Heart left ventricle (tissue), 16 donors: ENCODE measurements at regions of chr5 and their contacts with region 1.

Region 1: DNA sequence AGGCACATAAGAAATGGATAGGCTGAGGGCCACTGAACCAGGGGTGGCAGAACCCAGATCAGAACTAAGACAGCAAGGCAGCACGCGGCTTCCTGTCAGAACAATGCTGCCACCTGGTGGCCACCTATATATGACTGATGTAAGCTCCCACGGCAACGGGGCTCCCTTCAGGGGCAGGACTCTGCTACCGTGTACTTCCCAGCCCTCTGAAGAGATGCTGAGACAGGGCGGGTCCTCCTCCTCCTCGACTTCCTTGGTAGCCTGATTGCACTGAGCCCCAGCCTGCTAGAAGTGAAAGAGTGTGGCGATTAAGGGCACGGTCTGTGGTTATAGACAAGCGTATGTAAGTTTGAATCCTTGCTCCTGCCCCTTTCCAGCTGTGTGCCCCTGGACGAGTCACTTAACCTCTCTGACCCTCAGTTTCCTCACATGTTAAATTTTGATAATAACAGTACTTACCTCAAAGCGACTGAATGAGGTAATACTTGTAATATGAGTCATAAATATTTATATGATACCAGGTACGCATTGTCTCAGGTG is 13.3 kb downstream of the RPS14 start:
- DNase-seq: peak; percentile 85 to 93 (median 88)
- ATAC-seq: peak; percentile 53 to 87 (median 85)
- H3K4me3 ChIP-seq: no peak overlapping the region
- H3K27ac ChIP-seq: no peak overlapping the region
- H3K4me1 ChIP-seq: peaks cover 0 to 16% (median 1%) of the 10 kb centered on the region in 12 donors
- H3K27me3 ChIP-seq: no peaks in the 10 kb centered on the region
- CTCF ChIP-seq: peak; percentile 82 to 94 (median 89)
- POLR2A ChIP-seq: no peak

Region 2: GRCh38 chr5:150022163-150022540 is 414.1 kb before region 1 on chr5:
- intact Hi-C with region 1: loop called in 1 of 10 experiments (anchors 10 kb)
- DNase-seq: peak in 1 of 5 donors; percentile 36
- ATAC-seq: peak; percentile 48 to 79 (median 76)
- H3K4me3 ChIP-seq: peak overlapping the region in 3 of 12 donors; percentile 1 to 16 (median 13)
- H3K27ac ChIP-seq: peak overlapping the region; percentile 53 to 81 (median 68)
- H3K4me1 ChIP-seq: peaks cover 5 to 54% (median 40%) of the 10 kb centered on the region in 12 donors
- H3K27me3 ChIP-seq: no peaks in the 10 kb centered on the region
- CTCF ChIP-seq: no peak
- POLR2A ChIP-seq: no peak

Region 3: DNA sequence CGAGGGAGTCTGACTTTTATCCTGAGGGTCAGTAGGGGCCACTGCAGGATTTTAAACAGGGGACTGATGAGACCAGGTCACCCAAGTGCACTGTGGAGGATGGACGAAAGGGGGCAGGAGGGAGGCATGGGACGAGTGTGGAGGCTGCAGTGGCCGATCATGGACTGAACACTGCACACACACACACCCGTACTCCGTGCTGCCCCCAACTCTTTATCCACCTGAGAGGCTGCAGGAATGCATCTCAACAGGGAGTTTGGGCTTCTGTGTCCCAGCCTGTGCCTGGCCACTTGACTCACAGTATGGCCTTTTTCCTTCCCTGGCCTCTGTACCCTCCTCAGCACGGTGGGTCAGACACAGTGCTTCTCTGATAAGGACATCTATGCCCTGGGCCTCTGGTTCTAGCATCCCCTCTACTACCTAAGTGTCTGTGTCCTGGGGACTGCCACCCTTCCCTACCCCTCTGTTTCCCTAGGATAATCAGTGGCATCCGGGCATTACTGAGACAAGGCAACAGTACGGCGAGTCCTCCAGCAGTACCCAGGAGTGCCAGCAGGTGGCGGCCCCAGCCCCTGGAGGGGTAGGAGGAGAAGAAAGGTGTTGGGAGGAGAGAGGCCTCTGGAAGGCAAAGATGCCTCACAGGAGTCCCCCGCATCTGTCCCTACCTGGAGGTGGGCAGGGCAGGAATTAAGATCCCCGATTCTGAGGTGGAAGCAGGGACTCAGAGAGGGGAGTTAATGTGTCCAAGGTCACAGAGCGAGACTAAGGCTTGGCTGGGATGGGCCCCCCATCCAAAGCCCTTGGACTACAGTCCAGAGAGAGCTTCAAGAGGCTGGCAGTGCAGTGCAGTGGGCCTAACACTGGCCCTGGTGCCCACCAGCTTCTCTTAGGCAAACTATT is 274.7 kb before region 1 on chr5:
- intact Hi-C with region 1: loop called in 2 of 10 experiments (anchors 5 to 10 kb)
- DNase-seq: peak; percentile 82 to 91 (median 83)
- ATAC-seq: peak; percentile 41 to 70 (median 56)
- H3K4me3 ChIP-seq: no peak overlapping the region
- H3K27ac ChIP-seq: peak overlapping the region in 11 of 12 donors; percentile 37 to 96 (median 84)
- H3K4me1 ChIP-seq: peaks cover 0 to 85% (median 58%) of the 10 kb centered on the region in 12 donors
- H3K27me3 ChIP-seq: peaks cover 0 to 4% (median 0%) of the 10 kb centered on the region in 9 donors
- CTCF ChIP-seq: peak; percentile 83 to 95 (median 91)
- POLR2A ChIP-seq: no peak

Region 4: GRCh38 chr5:150272526-150272925 is 163.7 kb before region 1 on chr5:
- intact Hi-C with region 1: loop called in 5 of 10 experiments (anchors 10 kb)
- DNase-seq: no peak
- ATAC-seq: peak in 2 of 4 donors; percentile 25 to 57
- H3K4me3 ChIP-seq: no peak overlapping the region
- H3K27ac ChIP-seq: no peak overlapping the region
- H3K4me1 ChIP-seq: no peaks in the 10 kb centered on the region
- H3K27me3 ChIP-seq: no peaks in the 10 kb centered on the region
- CTCF ChIP-seq: peak in 5 of 12 donors; percentile 10 to 40 (median 27)
- POLR2A ChIP-seq: no peak

Region 5: DNA sequence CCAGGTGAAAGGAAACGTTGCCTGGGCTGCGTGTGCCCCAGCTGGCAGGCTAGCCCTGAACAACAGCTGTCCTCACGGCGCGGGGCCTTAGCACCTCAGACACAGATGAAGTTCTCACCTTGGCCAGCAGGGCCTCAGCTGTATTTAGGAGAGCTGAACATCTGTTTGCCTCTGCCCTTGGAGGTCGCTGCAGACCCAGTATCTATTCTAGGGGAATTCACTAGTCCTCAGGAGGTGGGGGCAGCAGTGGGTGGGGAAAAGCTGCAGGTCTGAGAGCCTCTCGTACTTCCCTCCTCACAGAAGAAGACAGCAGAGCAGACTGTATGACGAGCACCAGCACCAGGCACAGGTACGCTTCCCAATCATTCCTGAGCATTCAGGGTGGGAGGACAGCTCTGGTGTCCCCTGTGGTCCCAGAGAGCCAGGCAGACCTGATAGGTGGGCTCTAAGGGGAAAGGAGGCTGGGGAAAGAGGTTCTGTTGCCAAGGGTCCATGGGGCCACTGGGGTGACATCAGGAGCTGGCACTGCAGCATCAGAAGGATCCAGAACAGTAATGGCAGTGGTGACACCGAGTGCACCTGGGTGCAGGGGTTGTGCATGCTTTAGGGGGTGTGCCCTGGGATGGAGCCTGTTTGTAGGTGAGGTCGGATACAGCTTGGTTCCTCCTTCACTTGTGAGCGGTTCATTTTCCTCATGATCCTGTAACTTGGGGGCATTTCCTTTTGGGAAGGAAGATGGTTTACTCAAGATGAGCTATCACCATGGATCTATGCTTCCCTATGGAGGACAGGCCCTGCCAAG is 37.3 kb before region 1 on chr5:
- intact Hi-C with region 1: loop called in 8 of 10 experiments (anchors 5 to 10 kb)
- DNase-seq: peak in 1 of 5 donors; percentile 29
- ATAC-seq: no peak
- H3K4me3 ChIP-seq: no peak overlapping the region
- H3K27ac ChIP-seq: no peak overlapping the region
- H3K4me1 ChIP-seq: peaks cover 0 to 4% (median 0%) of the 10 kb centered on the region in 12 donors
- H3K27me3 ChIP-seq: no peaks in the 10 kb centered on the region
- CTCF ChIP-seq: peak in 5 of 12 donors; percentile 14 to 24 (median 16)
- POLR2A ChIP-seq: no peak